PC-3 (cell line): ENCODE measurements at regions of chr2 and their contacts with region 1.

Region 1: DNA sequence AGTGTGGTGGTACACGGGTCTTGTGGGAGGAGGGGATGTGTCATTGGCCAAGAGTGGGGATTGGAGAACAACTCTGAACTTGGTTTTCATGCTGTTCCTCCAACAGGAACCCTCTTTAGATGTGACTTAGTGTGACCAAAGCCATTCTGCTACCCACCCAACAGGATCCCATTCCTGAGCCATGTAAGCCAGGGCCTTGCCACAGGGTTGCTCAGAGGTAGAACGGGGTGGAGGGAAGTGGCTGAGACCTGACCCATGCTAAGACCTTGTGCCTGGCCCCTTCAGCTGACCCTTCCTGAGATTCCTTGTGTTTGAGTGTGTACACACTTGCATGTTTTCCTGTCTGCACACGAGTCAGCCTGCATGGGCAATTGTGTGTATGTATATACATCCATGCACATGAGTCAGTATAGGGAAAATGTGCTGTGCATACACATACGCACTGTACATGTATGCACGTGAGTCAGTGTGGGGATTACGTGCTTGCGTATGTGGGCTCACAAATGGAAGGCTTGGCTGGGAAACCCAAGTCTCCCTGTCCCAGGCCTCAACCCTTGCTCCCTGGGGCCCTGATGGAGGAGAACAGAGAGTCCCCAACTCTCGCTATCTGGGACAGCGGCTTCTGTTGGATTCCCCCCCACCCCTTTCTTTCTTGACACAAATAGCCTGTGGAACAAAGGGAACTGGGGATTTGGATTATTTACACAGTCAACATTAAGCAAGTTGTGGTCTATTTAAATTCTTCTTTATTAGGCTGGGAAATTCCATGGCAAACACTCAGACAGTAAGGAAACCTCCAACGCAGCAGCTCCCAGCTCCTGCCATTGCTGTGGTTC is 339.8 kb downstream of the DYSF start:
- DNase-seq: peak; percentile 85
- ATAC-seq: peak; percentile 71
- H3K4me3 ChIP-seq: peak overlapping the region; percentile 13; the same call in 1 of the 2 replicates
- H3K27ac ChIP-seq: peak overlapping the region; percentile 36
- H3K4me1 ChIP-seq: peaks cover 36% of the 10 kb centered on the region
- H3K27me3 ChIP-seq: no peaks in the 10 kb centered on the region
- CTCF ChIP-seq: no peak

Region 2: GRCh38 chr2:71696381-71696780 is 96.8 kb before region 1 on chr2:
- CTCF ChIA-PET with region 1: no interaction called
- POLR2A ChIA-PET with region 1: no interaction called
- intact Hi-C with region 1: no loop called
- DNase-seq: no peak
- ATAC-seq: no peak
- H3K4me3 ChIP-seq: no peak overlapping the region
- H3K27ac ChIP-seq: no peak overlapping the region
- H3K4me1 ChIP-seq: no peaks in the 10 kb centered on the region
- H3K27me3 ChIP-seq: no peaks in the 10 kb centered on the region
- CTCF ChIP-seq: no peak

Region 3: GRCh38 chr2:71742953-71743601 is 50.1 kb before region 1 on chr2:
- CTCF ChIA-PET with region 1: no interaction called
- POLR2A ChIA-PET with region 1: no interaction called
- intact Hi-C with region 1: loop called (anchors 2 kb)
- DNase-seq: peak; percentile 96
- ATAC-seq: peak; percentile 74
- H3K4me3 ChIP-seq: no peak overlapping the region
- H3K27ac ChIP-seq: peak overlapping the region; percentile 20; the same call in 1 of the 2 replicates
- H3K4me1 ChIP-seq: peaks cover 50% of the 10 kb centered on the region
- H3K27me3 ChIP-seq: no peaks in the 10 kb centered on the region
- CTCF ChIP-seq: no peak

Region 4: DNA sequence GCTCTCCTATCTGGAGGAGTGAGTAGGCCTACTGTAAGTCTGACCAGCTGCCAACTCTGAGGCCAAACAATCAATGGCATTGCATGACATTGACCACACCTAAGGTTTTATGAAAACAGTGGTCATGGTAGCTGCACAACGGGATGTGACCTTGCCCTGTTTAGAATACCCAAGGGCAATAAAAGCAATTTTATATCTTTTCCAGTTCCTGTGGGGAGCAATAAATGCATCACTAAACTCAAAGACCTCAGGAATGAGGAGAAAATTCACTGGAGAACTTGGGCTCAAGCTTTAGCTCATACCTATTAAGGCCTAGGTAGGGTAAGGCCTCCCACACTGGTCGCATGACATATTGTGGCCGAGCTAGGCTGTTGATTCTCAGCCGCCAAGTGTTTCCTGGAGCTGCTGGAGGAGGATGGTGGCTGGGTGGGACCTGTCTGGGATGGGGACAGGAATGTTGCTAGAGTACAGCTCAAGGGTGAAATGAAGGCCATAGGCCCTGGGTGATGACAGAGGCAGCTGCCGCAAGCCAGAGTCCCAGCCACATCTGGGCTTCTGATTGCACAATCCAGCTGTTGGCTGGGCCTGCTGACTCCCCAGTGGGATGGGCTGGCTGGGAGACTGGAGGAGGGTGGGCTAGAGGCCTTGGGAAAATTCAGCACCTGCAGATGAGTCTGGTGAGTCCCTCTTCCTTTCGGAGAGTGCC is 40.9 kb after region 1 on chr2:
- CTCF ChIA-PET with region 1: no interaction called
- POLR2A ChIA-PET with region 1: no interaction called
- intact Hi-C with region 1: loop called (anchors 1 kb)
- DNase-seq: peak; percentile 83
- ATAC-seq: peak; percentile 91
- H3K4me3 ChIP-seq: no peak overlapping the region
- H3K27ac ChIP-seq: peak overlapping the region; percentile 61
- H3K4me1 ChIP-seq: peaks cover 30% of the 10 kb centered on the region
- H3K27me3 ChIP-seq: peaks cover 15% of the 10 kb centered on the region; the same call in 1 of the 2 replicates
- CTCF ChIP-seq: no peak